Panc1 (cell line): ENCODE measurements at regions of chr12 and their contacts with region 1.

Region 1: GRCh38 chr12:93550748-93551611 is 21.5 kb upstream of the SOCS2 start:
- DNase-seq: no peak
- ATAC-seq: peak; percentile 71
- H3K4me3 ChIP-seq: no peak overlapping the region
- H3K27ac ChIP-seq: peak overlapping the region; percentile 23; the same call in 1 of the 2 replicates
- H3K4me1 ChIP-seq: no peaks in the 10 kb centered on the region; the same call in 1 of the 2 replicates
- H3K27me3 ChIP-seq: no peaks in the 10 kb centered on the region
- CTCF ChIP-seq: 0 out of 2 replicates have a peak, but pooled peaks have one; percentile 4

Region 2: DNA sequence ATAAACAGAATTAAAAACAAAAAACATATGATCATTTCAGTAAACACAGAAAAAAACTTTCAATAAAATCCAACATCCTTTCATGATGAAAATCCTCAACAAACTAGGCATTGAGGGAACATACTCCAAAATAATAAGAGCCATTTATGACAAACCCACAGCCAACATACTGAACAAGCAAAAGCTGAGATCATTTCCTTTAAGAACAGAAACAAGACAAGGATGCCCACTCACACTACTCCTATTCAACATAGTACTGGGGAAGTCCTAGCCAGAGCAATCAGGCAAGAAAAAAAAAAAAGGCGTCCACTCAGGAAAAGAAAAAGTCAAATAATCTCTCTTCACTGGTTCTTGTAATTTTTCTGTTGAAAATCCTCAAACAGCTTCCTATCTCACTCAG is 53.5 kb before region 1 on chr12:
- CTCF ChIA-PET with region 1: interaction called, 4 read pairs
- POLR2A ChIA-PET with region 1: interaction called, 15 read pairs
- in situ Hi-C with region 1: no loop called
- intact Hi-C with region 1: no loop called
- DNase-seq: no peak
- ATAC-seq: no peak
- H3K4me3 ChIP-seq: no peak overlapping the region
- H3K27ac ChIP-seq: no peak overlapping the region
- H3K4me1 ChIP-seq: peaks cover 5% of the 10 kb centered on the region; the same call in 1 of the 2 replicates
- H3K27me3 ChIP-seq: no peaks in the 10 kb centered on the region
- CTCF ChIP-seq: no peak